ENCODE measurements at regions of chr2 and their contacts with region 1.

Region 1: GRCh38 chr2:218216674-218217359 is at the start of gene ARPC2:
- DNase-seq: peak; percentile 90 to 98 (median 93)
- ATAC-seq: peak; percentile 73
- H3K4me3 ChIP-seq: peak within 1 kb of the TSS; percentile 80
- H3K4me3 Mint-ChIP-seq: peak within 1 kb of the TSS; percentile 95
- H3K27ac ChIP-seq: peak within 1 kb of the TSS; percentile 96 to 99
- H3K27ac Mint-ChIP-seq: peak within 1 kb of the TSS; percentile 96
- H3K4me1 ChIP-seq: peaks cover 36% of the 10 kb centered on the region
- H3K4me1 Mint-ChIP-seq: peaks cover 45% of the 10 kb centered on the region
- H3K27me3 ChIP-seq: no peaks in the 10 kb centered on the region
- H3K27me3 Mint-ChIP-seq: no peaks in the 10 kb centered on the region
- CTCF ChIP-seq: no peak
- total RNA-seq, gene ARPC2: 448 to 452 TPM

Region 2: GRCh38 chr2:217666338-217666737 is 550.5 kb before region 1 on chr2:
- CTCF ChIA-PET with region 1: no interaction called
- POLR2A ChIA-PET with region 1: no interaction called
- intact Hi-C with region 1: no loop called
- DNase-seq: no peak
- ATAC-seq: no peak
- H3K4me3 ChIP-seq: no peak overlapping the region
- H3K4me3 Mint-ChIP-seq: no peak overlapping the region
- H3K27ac ChIP-seq: no peak overlapping the region
- H3K27ac Mint-ChIP-seq: no peak overlapping the region
- H3K4me1 ChIP-seq: no peaks in the 10 kb centered on the region
- H3K4me1 Mint-ChIP-seq: peaks cover 6% of the 10 kb centered on the region
- H3K27me3 ChIP-seq: no peaks in the 10 kb centered on the region
- H3K27me3 Mint-ChIP-seq: no peaks in the 10 kb centered on the region
- CTCF ChIP-seq: no peak

Region 3: DNA sequence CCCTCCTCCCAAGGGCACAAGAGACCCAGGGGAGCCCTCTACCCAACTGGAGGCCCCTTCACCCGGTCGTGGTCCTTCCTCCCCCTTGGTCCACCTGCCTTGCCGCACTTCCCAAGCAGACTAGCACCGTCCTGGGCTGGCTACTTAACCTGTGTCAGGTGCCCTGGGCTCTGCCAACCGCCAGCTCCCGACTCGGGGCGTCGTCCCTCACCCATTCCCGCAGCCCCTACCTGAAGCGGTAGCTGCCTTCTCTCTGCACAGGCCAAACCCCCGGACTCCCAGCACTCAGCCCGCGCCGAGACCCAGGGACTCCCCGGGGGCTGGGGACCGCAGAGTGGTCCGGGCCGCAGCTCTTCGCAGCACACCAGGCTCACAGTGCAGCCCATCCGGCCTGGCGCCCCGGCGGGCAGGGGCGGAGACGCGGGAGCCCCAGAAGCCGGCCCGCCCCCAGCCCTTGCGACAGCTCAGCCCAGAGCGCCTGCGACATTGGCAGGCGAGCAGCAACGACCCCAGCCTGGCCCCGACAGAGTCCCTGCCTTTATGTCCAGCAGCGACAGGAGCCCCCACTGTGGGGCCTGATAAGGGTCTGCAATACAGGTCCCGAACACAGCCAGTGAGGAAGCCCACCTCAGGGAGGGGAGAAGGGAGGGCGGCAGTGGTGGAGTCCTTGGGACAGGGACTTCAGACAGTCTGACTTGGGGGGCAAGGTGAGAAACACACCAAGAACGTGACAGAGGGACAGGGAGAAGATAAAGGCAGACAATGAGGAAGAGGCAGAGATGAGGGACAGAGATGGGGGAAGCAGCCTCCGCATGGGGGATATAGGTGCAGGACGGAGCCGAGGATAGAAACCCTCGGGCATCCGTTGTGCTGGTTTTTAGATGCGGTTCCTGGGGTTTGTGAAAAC is 183.0 kb before region 1 on chr2:
- CTCF ChIA-PET with region 1: no interaction called
- POLR2A ChIA-PET with region 1: no interaction called
- intact Hi-C with region 1: no loop called
- DNase-seq: peak in 2 of 14 experiments; percentile 23 to 27
- ATAC-seq: no peak
- H3K4me3 ChIP-seq: peak overlapping the region; percentile 46
- H3K4me3 Mint-ChIP-seq: peak overlapping the region; percentile 76
- H3K27ac ChIP-seq: no peak overlapping the region
- H3K27ac Mint-ChIP-seq: peak overlapping the region; percentile 22
- H3K4me1 ChIP-seq: peaks cover 19% of the 10 kb centered on the region
- H3K4me1 Mint-ChIP-seq: peaks cover 11% of the 10 kb centered on the region
- H3K27me3 ChIP-seq: peaks cover 0 to 4% of the 10 kb centered on the region in 2 experiments
- H3K27me3 Mint-ChIP-seq: peaks cover 7% of the 10 kb centered on the region
- CTCF ChIP-seq: no peak

Region 4: GRCh38 chr2:218229239-218229638 is 12.4 kb after region 1 on chr2:
- CTCF ChIA-PET with region 1: interaction called, 6 read pairs
- POLR2A ChIA-PET with region 1: interaction called, 64 read pairs
- intact Hi-C with region 1: loop called (anchors 1 to 2 kb)
- DNase-seq: peak in 10 of 14 experiments; percentile 13 to 85 (median 36)
- ATAC-seq: peak; percentile 82
- H3K4me3 ChIP-seq: no peak overlapping the region
- H3K4me3 Mint-ChIP-seq: peak overlapping the region; percentile 71
- H3K27ac ChIP-seq: peak overlapping the region; percentile 51 to 60
- H3K27ac Mint-ChIP-seq: peak overlapping the region; percentile 91
- H3K4me1 ChIP-seq: peaks cover 70% of the 10 kb centered on the region
- H3K4me1 Mint-ChIP-seq: peaks cover 78% of the 10 kb centered on the region
- H3K27me3 ChIP-seq: no peaks in the 10 kb centered on the region
- H3K27me3 Mint-ChIP-seq: no peaks in the 10 kb centered on the region
- CTCF ChIP-seq: no peak

Region 5: DNA sequence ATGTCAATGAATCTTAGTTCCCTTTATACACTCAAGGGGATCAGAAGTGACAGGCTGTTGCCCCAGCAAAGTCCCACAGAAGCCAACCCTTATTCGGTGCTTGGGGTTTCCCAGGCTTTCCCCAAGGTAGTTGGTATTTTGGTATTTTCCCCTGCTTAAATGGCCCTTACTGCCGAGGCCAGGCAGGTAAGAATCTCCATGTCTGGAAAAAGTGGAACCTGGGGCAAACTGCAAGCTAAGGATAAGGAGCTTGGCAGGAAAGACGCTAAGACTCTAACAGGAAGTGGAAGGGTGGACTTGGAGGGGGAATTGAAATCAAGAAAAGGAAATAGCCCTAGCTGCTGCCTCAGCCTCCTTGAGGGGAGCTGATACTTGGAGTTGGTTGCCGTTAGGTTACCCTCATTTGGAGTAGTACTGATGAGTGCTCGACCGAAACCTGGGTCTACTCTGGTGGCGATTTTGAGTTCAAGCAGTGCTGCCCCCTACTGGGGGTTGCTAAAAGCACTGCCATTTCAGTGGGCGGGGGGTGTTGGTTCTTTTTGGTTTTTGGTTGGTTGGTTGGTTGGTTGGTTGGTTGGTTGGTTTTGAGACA is 40.7 kb after region 1 on chr2:
- CTCF ChIA-PET with region 1: interaction called, 5 read pairs
- POLR2A ChIA-PET with region 1: interaction called, 3 read pairs
- intact Hi-C with region 1: loop called in 1 of 2 experiments (anchors 5 kb)
- DNase-seq: peak; percentile 43 to 84 (median 58)
- ATAC-seq: peak; percentile 80
- H3K4me3 ChIP-seq: no peak overlapping the region
- H3K4me3 Mint-ChIP-seq: peak overlapping the region; percentile 51
- H3K27ac ChIP-seq: peak overlapping the region; percentile 56 to 67
- H3K27ac Mint-ChIP-seq: peak overlapping the region; percentile 91
- H3K4me1 ChIP-seq: peaks cover 22% of the 10 kb centered on the region
- H3K4me1 Mint-ChIP-seq: peaks cover 22% of the 10 kb centered on the region
- H3K27me3 ChIP-seq: no peaks in the 10 kb centered on the region
- H3K27me3 Mint-ChIP-seq: no peaks in the 10 kb centered on the region
- CTCF ChIP-seq: peak; percentile 64

Region 6: DNA sequence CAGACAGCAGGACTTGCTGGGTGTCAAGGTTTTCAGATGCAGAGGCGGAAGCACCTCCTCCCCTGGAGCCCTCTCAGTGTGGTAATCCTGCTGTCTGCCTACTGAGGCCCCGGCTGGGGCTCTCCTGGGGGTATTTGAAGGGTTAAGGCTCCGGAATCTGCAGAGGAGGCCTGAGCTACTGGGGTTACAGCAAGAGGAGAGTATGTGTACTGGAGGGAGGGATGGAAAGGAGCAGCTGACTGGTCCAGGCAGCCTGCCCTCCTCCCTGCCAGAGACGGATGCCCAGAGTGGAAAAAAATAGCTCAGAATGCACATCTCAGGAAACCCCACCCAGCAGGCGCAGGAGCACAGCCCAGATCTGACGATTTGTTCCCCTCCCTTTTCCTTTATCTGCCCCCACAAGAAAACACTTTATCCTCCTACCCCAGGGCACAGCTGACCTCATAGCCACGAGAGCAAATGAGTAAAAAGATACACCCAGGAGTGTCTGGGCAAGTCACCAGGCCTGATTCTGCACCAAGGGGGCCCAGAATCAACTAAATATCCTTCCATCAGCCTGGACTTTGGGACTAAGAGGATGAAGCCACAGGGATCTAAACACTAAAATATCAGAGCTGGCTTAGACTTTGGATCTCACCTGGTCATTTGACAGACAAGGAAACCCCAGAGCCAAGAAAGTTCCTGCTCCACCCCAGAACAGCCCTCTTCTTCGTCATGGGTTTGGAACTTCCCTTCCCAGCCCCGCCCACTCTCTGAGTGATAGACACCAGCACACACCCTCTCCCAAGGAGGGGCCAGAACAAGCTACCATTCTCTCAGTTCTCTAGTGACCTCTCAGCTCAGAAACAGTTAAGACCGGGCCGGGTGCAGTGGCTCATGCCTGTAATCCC is 70.0 kb after region 1 on chr2:
- CTCF ChIA-PET with region 1: no interaction called
- POLR2A ChIA-PET with region 1: interaction called, 14 read pairs
- intact Hi-C with region 1: no loop called
- DNase-seq: peak; percentile 49 to 96 (median 69)
- ATAC-seq: peak; percentile 58
- H3K4me3 ChIP-seq: peak overlapping the region; percentile 56
- H3K4me3 Mint-ChIP-seq: peak overlapping the region; percentile 91
- H3K27ac ChIP-seq: peak overlapping the region; percentile 95 to 98
- H3K27ac Mint-ChIP-seq: peak overlapping the region; percentile 99
- H3K4me1 ChIP-seq: peaks cover 100% of the 10 kb centered on the region
- H3K4me1 Mint-ChIP-seq: peaks cover 94% of the 10 kb centered on the region
- H3K27me3 ChIP-seq: no peaks in the 10 kb centered on the region
- H3K27me3 Mint-ChIP-seq: no peaks in the 10 kb centered on the region
- CTCF ChIP-seq: no peak